ENCODE measurements at regions of chr1 and their contacts with region 1.

Region 1: DNA sequence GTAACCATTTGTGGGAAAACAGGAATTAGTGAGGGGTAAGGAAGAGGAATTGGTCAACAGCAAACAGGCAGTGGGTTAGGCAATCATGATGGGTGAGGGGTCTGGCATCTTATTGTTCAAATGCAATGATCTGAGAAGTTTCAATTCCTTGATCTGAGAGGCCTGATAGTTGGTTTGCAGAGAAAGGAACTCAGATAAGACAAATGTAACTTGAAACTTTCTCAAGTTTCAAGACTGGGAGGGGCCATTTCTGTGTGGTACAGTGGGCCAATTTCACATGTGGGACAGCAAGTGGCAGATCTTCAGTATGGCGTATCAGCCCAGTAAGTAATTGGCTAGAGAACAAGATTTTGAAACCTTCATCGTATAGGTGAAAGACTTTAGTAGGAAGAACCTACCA is 102.5 kb downstream of the XPR1 start:
- DNase-seq: no peak
- ATAC-seq: no peak

Region 2: GRCh38 chr1:178802873-178803272 is 1931.5 kb before region 1 on chr1:
- intact Hi-C with region 1: no loop called
- DNase-seq: no peak
- ATAC-seq: no peak

Region 3: DNA sequence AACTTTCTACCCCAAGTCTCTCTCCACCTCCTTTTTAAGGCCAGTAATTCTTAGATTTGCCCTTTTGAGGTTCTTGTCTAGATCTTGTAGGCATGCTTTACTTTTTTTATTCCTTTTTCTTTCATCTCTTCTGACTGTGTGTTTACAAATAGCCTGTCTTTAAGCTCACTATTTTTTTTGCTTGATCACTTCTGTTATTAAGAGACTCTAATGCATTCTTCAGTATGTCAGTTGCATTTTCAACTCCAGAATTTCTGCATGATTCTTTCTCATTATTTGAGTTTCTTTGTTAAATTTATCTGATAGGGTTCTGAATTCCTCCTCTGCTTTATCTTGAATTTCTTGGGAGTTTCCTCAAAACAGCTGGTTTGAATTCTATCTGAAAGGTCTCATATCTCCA is 71.7 kb before region 1 on chr1:
- intact Hi-C with region 1: loop called (anchors 2 kb)
- DNase-seq: no peak
- ATAC-seq: no peak